ENCODE measurements at regions of chr5 and their contacts with region 1.

Region 1: DNA sequence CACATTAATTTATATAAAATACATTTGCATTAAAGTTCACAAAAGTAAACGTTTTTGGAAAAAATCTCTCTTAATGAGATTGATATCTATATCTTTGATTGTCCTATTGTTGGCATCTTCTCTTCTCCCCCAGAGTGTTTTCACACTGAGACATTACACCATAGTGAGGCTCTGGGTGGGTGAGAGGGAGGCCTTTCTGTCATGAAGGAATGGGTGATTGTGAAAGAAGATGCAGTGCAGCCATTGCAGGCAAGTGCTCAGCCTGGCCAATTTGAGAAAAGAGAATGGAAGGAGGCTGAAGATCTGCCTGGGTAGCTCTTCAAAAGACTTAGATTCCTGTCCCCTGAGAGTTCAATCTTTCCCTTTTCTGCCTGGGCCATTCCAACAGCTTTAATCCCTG is 140.8 kb downstream of the SLC12A2 start:
- DNase-seq: no peak
- H3K4me3 ChIP-seq: no peak overlapping the region
- H3K27ac ChIP-seq: no peak overlapping the region
- H3K4me1 ChIP-seq: no peaks in the 10 kb centered on the region
- H3K27me3 ChIP-seq: no peaks in the 10 kb centered on the region
- CTCF ChIP-seq: no peak
- POLR2A ChIP-seq: no peak

Region 2: GRCh38 chr5:128494516-128494915 is 270.2 kb after region 1 on chr5:
- intact Hi-C with region 1: no loop called
- DNase-seq: no peak
- H3K4me3 ChIP-seq: no peak overlapping the region
- H3K27ac ChIP-seq: no peak overlapping the region
- H3K4me1 ChIP-seq: no peaks in the 10 kb centered on the region
- H3K27me3 ChIP-seq: no peaks in the 10 kb centered on the region
- CTCF ChIP-seq: no peak
- POLR2A ChIP-seq: no peak

Region 3: GRCh38 chr5:128674825-128675446 is 450.6 kb after region 1 on chr5:
- intact Hi-C with region 1: loop called (anchors 5 to 10 kb)
- DNase-seq: peak; percentile 46 to 76 (median 61)
- H3K4me3 ChIP-seq: no peak overlapping the region
- H3K27ac ChIP-seq: no peak overlapping the region
- H3K4me1 ChIP-seq: no peaks in the 10 kb centered on the region
- H3K27me3 ChIP-seq: no peaks in the 10 kb centered on the region
- CTCF ChIP-seq: peak; percentile 54 to 74 (median 64)
- POLR2A ChIP-seq: no peak

Region 4: DNA sequence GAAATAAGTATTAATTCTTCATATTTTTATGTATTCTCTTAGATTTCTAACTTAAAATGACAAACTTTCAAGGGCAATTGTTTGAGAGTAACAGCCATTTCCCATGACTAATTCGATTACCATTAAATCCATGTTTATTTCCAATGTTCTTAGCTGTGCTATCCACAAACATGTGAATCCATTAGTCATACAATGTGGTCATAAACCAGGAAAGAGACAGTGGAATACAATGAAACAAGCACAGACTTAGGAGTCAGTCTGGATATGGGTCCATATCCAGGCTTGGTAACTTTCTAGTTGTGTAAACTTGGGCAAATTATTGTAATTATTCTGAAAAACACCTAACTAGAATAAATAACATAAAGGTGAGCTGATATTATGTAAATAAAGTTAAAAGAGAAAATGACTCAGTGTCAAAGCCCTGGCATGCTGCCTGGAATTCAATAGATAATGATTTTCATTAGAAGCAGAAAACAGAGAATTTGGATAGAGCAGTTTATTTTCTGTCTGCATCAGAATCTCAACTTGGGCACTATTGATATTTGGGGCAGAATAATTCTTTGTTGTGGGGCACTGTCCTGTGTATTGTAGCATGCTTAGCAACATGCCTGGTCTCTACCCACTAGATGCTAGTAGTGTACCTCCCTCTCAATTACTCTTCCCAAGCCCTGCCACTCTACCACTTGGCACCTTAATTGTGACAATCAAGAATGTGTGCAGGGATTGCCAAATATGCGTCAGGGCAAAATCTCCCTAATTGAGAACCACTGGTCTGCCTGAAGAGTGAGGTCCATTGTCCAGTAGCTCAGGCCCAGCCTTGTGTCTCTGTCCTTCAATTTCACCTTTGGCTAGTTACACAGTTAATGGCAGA is 696.2 kb after region 1 on chr5:
- intact Hi-C with region 1: no loop called
- DNase-seq: peak in 6 of 7 donors; percentile 16 to 53 (median 32)
- H3K4me3 ChIP-seq: no peak overlapping the region
- H3K27ac ChIP-seq: no peak overlapping the region
- H3K4me1 ChIP-seq: no peaks in the 10 kb centered on the region
- H3K27me3 ChIP-seq: no peaks in the 10 kb centered on the region
- CTCF ChIP-seq: no peak
- POLR2A ChIP-seq: no peak